CD4-positive, alpha-beta T cell (primary cell): ENCODE measurements at regions of chr5 and their contacts with region 1.

Region 1: GRCh38 chr5:177311723-177312648 is at the start of gene MXD3:
- DNase-seq: peak; percentile 87 to 96 (median 94)
- ATAC-seq: peak; percentile 93
- H3K4me3 ChIP-seq: peak within 1 kb of the TSS; percentile 69
- H3K4me3 Mint-ChIP-seq: peak within 1 kb of the TSS; percentile 83
- H3K27ac ChIP-seq: peak within 1 kb of the TSS in 1 of 2 donors; percentile 3
- H3K27ac Mint-ChIP-seq: no peak within 1 kb of the TSS
- H3K4me1 ChIP-seq: peaks cover 59% of the 10 kb centered on the region
- H3K4me1 Mint-ChIP-seq: peaks cover 40% of the 10 kb centered on the region
- H3K27me3 ChIP-seq: peaks cover 0 to 3% of the 10 kb centered on the region in 2 experiments
- H3K27me3 Mint-ChIP-seq: peaks cover 6% of the 10 kb centered on the region
- CTCF ChIP-seq: no peak
- total RNA-seq, gene MXD3: 5.8 to 7.5 TPM

Region 2: GRCh38 chr5:177357459-177358351 is 45.7 kb after region 1 on chr5 and contains the start of gene RGS14:
- CTCF ChIA-PET with region 1: interaction called, 6 read pairs
- POLR2A ChIA-PET with region 1: no interaction called
- intact Hi-C with region 1: loop called (anchors 5 kb)
- DNase-seq: peak; percentile 55 to 93 (median 70)
- ATAC-seq: peak; percentile 91
- H3K4me3 ChIP-seq: peak within 1 kb of the TSS; percentile 99
- H3K4me3 Mint-ChIP-seq: peak within 1 kb of the TSS; percentile 82
- H3K27ac ChIP-seq: peak within 1 kb of the TSS; percentile 78 to 80
- H3K27ac Mint-ChIP-seq: peak within 1 kb of the TSS; percentile 83
- H3K4me1 ChIP-seq: peaks cover 79% of the 10 kb centered on the region
- H3K4me1 Mint-ChIP-seq: peaks cover 81% of the 10 kb centered on the region
- H3K27me3 ChIP-seq: no peaks in the 10 kb centered on the region
- H3K27me3 Mint-ChIP-seq: no peaks in the 10 kb centered on the region
- CTCF ChIP-seq: no peak
- total RNA-seq, gene RGS14: 34.7 to 35.3 TPM

Region 3: GRCh38 chr5:177362610-177363507 is 50.9 kb after region 1 on chr5:
- CTCF ChIA-PET with region 1: no interaction called
- POLR2A ChIA-PET with region 1: no interaction called
- intact Hi-C with region 1: loop called (anchors 5 kb)
- DNase-seq: peak in 13 of 14 experiments; percentile 47 to 93 (median 63)
- ATAC-seq: peak; percentile 72
- H3K4me3 ChIP-seq: peak overlapping the region; percentile 61
- H3K4me3 Mint-ChIP-seq: peak overlapping the region; percentile 90
- H3K27ac ChIP-seq: peak overlapping the region; percentile 72 to 82
- H3K27ac Mint-ChIP-seq: peak overlapping the region; percentile 76
- H3K4me1 ChIP-seq: peaks cover 84% of the 10 kb centered on the region
- H3K4me1 Mint-ChIP-seq: peaks cover 63% of the 10 kb centered on the region
- H3K27me3 ChIP-seq: no peaks in the 10 kb centered on the region
- H3K27me3 Mint-ChIP-seq: no peaks in the 10 kb centered on the region
- CTCF ChIP-seq: no peak

Region 4: GRCh38 chr5:177454397-177455035 is 142.5 kb after region 1 on chr5:
- CTCF ChIA-PET with region 1: interaction called, 4 read pairs
- POLR2A ChIA-PET with region 1: no interaction called
- intact Hi-C with region 1: loop called (anchors 2 to 5 kb)
- DNase-seq: peak; percentile 87 to 97 (median 94)
- ATAC-seq: peak; percentile 45
- H3K4me3 ChIP-seq: peak overlapping the region; percentile 71
- H3K4me3 Mint-ChIP-seq: peak overlapping the region; percentile 89
- H3K27ac ChIP-seq: peak overlapping the region; percentile 90 to 95
- H3K27ac Mint-ChIP-seq: peak overlapping the region; percentile 93
- H3K4me1 ChIP-seq: peaks cover 52% of the 10 kb centered on the region
- H3K4me1 Mint-ChIP-seq: peaks cover 43% of the 10 kb centered on the region
- H3K27me3 ChIP-seq: no peaks in the 10 kb centered on the region
- H3K27me3 Mint-ChIP-seq: no peaks in the 10 kb centered on the region
- CTCF ChIP-seq: peak; percentile 79

Region 5: DNA sequence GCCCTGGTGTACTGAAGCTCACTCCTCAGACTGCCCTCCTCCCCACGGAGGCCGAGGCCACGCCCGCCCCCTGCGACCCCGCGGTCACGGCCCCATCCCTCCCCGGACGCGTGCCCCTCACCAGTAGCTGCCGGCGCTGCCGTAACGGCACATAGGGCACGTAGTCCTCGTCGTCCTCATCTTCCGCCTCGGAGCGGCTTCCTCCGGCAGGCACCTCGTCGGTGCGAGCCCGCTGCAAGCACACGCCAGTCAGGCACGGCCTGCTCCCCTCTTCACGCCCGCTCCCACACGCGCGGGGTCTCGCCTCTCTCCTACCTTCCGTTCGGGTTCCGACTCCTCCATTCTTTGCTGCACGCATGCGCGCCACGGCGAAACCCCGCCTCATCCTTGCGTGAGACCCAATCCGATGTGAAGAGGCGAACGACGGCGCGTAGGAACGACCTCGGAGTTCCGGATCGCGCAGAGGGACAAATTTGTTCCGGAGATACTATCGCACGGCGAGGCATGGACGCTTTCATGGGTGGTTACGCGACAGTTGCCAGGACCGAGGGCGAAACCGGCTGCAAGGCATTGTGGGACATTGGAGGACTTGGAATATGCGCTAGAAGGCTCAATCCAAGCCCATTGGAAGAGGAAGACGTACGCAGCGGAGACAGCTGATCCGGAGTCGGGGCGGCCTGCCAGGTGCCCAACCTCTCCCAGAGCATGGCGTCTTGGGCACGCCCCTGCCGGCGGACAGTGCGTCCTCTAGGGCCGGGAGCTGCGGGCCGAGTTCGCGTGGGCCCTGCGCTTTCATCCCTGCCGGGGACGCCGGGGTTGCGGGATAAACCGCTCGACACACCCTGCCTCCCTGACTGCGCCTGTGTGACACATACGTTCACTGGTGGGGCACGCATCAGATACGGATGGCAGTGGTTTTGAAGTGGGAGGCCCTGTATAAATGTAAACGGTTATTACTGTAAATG is 204.9 kb after region 1 on chr5 and contains the start of gene DDX41:
- CTCF ChIA-PET with region 1: no interaction called
- POLR2A ChIA-PET with region 1: no interaction called
- intact Hi-C with region 1: loop called in 1 of 2 experiments (anchors 5 kb)
- DNase-seq: peak; percentile 88 to 98 (median 94)
- ATAC-seq: peak; percentile 90
- H3K4me3 ChIP-seq: peak within 1 kb of the TSS; percentile 72
- H3K4me3 Mint-ChIP-seq: peak within 1 kb of the TSS; percentile 93
- H3K27ac ChIP-seq: peak within 1 kb of the TSS; percentile 36 to 54
- H3K27ac Mint-ChIP-seq: peak within 1 kb of the TSS; percentile 84
- H3K4me1 ChIP-seq: peaks cover 51% of the 10 kb centered on the region
- H3K4me1 Mint-ChIP-seq: peaks cover 43% of the 10 kb centered on the region
- H3K27me3 ChIP-seq: no peaks in the 10 kb centered on the region
- H3K27me3 Mint-ChIP-seq: no peaks in the 10 kb centered on the region
- CTCF ChIP-seq: no peak
- total RNA-seq, gene DDX41: 49.6 to 49.7 TPM